Activated naive CD4-positive, alpha-beta T cell treated with anti-CD3 and anti-CD28 coated beads for 36 hours (primary cell): ENCODE measurements at regions of chr5 and their contacts with region 1.

Region 1: GRCh38 chr5:157582731-157583620 is 7.4 kb upstream of the ADAM19 start:
- DNase-seq: peak; percentile 51
- H3K4me3 Mint-ChIP-seq: no peak overlapping the region
- H3K27ac Mint-ChIP-seq: peak overlapping the region; percentile 63
- H3K4me1 Mint-ChIP-seq: peaks cover 40% of the 10 kb centered on the region
- H3K27me3 Mint-ChIP-seq: no peaks in the 10 kb centered on the region

Region 2: GRCh38 chr5:157347301-157348048 is 235.5 kb before region 1 on chr5:
- CTCF ChIA-PET with region 1: no interaction called
- intact Hi-C with region 1: no loop called
- DNase-seq: no peak
- H3K4me3 Mint-ChIP-seq: no peak overlapping the region
- H3K27ac Mint-ChIP-seq: no peak overlapping the region
- H3K4me1 Mint-ChIP-seq: peaks cover 74% of the 10 kb centered on the region
- H3K27me3 Mint-ChIP-seq: no peaks in the 10 kb centered on the region

Region 3: GRCh38 chr5:157540707-157541446 is 42.1 kb before region 1 on chr5:
- CTCF ChIA-PET with region 1: no interaction called
- intact Hi-C with region 1: loop called (anchors 1 kb)
- DNase-seq: peak; percentile 63
- H3K4me3 Mint-ChIP-seq: peak overlapping the region; percentile 8
- H3K27ac Mint-ChIP-seq: peak overlapping the region; percentile 66
- H3K4me1 Mint-ChIP-seq: peaks cover 50% of the 10 kb centered on the region
- H3K27me3 Mint-ChIP-seq: no peaks in the 10 kb centered on the region

Region 4: GRCh38 chr5:157596487-157596886 is 13.5 kb after region 1 on chr5:
- CTCF ChIA-PET with region 1: interaction called, 6 read pairs
- intact Hi-C with region 1: loop called (anchors 1 kb)
- DNase-seq: peak; percentile 84
- H3K4me3 Mint-ChIP-seq: peak overlapping the region; percentile 13
- H3K27ac Mint-ChIP-seq: peak overlapping the region; percentile 92
- H3K4me1 Mint-ChIP-seq: peaks cover 96% of the 10 kb centered on the region
- H3K27me3 Mint-ChIP-seq: no peaks in the 10 kb centered on the region

Region 5: GRCh38 chr5:157718519-157718918 is 135.5 kb after region 1 on chr5:
- CTCF ChIA-PET with region 1: no interaction called
- intact Hi-C with region 1: loop called (anchors 5 kb)
- DNase-seq: no peak
- H3K4me3 Mint-ChIP-seq: no peak overlapping the region
- H3K27ac Mint-ChIP-seq: no peak overlapping the region
- H3K4me1 Mint-ChIP-seq: peaks cover 25% of the 10 kb centered on the region
- H3K27me3 Mint-ChIP-seq: no peaks in the 10 kb centered on the region

Region 6: DNA sequence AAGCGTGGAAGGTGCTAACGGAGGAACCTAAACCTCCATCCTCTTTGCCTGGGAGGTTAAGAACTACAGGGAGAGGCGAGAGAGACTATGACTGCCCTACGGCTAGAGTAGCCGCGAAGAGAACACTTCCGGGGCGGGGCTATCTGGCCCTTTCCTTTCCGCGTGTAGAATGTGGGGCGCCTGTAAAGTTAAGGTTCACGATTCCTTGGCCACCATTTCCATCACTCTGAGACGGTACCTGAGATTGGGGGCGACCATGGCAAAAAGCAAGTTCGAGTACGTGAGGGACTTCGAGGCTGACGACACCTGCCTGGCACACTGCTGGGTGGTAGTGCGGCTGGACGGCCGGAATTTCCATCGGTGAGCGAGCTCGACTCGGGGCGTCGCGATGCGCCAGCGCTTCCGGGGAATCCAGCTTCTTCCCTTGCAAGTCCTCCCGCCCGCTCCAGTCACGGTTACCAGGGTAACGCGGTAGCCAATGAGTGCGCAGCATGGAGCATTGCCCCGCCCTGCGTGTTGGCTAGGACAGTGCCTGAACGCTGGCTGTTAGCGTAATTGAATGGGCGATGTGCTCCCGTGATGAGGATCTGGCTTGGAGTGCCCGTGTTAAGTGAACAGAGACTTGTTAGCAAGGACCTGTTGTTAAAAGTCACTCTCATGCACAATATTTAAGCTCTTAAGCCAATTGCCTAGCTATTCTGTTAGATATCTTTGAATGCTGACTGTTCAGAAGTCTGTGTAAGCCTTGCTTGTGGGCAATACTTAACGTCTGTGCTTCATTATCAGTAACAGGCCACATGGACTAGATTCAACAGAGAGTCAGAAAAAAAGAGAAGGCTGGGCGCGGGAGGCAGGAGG is 148.5 kb after region 1 on chr5 and contains the start of gene THG1L:
- CTCF ChIA-PET with region 1: no interaction called
- intact Hi-C with region 1: loop called (anchors 1 kb)
- DNase-seq: peak; percentile 100
- H3K4me3 Mint-ChIP-seq: peak within 1 kb of the TSS; percentile 97
- H3K27ac Mint-ChIP-seq: peak within 1 kb of the TSS; percentile 95
- H3K4me1 Mint-ChIP-seq: peaks cover 25% of the 10 kb centered on the region
- H3K27me3 Mint-ChIP-seq: no peaks in the 10 kb centered on the region
- total RNA-seq, gene THG1L: 28.1 to 30.2 TPM